Naive thymus-derived CD4-positive, alpha-beta T cell (primary cell): ENCODE measurements at regions of chr10 and their contacts with region 1.

Region 1: GRCh38 chr10:11120711-11121110 is 103.0 kb downstream of the CELF2 start:
- DNase-seq: peak in 1 of 9 donors; percentile 20
- ATAC-seq: no peak
- H3K4me3 ChIP-seq: no peak overlapping the region
- H3K4me3 Mint-ChIP-seq: peak overlapping the region in 9 of 10 donors; percentile 23 to 79 (median 64)
- H3K27ac ChIP-seq: peak overlapping the region; percentile 4
- H3K27ac Mint-ChIP-seq: peak overlapping the region in 8 of 9 donors; percentile 4 to 86 (median 76)
- H3K4me1 ChIP-seq: peaks cover 0 to 3% of the 10 kb centered on the region in 2 donors
- H3K4me1 Mint-ChIP-seq: peaks cover 3 to 66% (median 42%) of the 10 kb centered on the region in 7 donors
- H3K27me3 ChIP-seq: no peaks in the 10 kb centered on the region
- H3K27me3 Mint-ChIP-seq: peaks cover 0 to 2% (median 0%) of the 10 kb centered on the region in 5 donors

Region 2: GRCh38 chr10:10869592-10869991 is 251.1 kb before region 1 on chr10:
- CTCF ChIA-PET with region 1: no interaction called
- POLR2A ChIA-PET with region 1: no interaction called
- intact Hi-C with region 1: no loop called
- DNase-seq: no peak
- ATAC-seq: no peak
- H3K4me3 ChIP-seq: no peak overlapping the region
- H3K4me3 Mint-ChIP-seq: no peak overlapping the region
- H3K27ac ChIP-seq: no peak overlapping the region
- H3K27ac Mint-ChIP-seq: no peak overlapping the region
- H3K4me1 ChIP-seq: no peaks in the 10 kb centered on the region
- H3K4me1 Mint-ChIP-seq: no peaks in the 10 kb centered on the region
- H3K27me3 ChIP-seq: peaks cover 0 to 4% of the 10 kb centered on the region in 2 donors
- H3K27me3 Mint-ChIP-seq: peaks cover 18 to 39% (median 25%) of the 10 kb centered on the region in 5 donors

Region 3: DNA sequence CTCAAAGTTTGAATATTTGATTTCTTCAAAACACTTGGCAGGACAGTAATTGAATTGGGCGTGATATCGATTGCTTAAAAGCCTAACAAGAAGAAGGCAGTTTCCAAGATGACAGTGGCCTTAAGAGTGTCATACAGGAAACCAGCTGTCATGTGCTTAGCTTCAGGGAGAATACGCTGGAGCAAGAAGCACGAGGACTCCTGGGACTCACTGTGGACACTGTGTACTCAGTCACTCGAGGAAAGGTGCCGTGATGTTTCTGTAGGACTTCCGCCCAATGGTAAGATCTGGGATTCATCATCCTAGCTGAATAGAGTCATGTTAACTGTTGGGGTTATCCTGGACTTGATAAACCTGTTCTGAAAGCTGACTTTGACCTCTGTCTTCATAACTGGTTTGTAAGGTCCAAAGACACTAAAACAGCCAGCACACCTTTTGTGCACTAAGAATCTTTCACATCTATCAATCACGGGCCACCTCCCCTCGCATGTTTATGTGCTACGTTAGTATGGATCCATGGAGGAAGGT is 10.5 kb after region 1 on chr10:
- CTCF ChIA-PET with region 1: no interaction called
- POLR2A ChIA-PET with region 1: interaction called, 3 read pairs
- intact Hi-C with region 1: loop called in 1 of 2 experiments (anchors 2 kb)
- DNase-seq: no peak
- ATAC-seq: no peak
- H3K4me3 ChIP-seq: no peak overlapping the region
- H3K4me3 Mint-ChIP-seq: no peak overlapping the region
- H3K27ac ChIP-seq: no peak overlapping the region
- H3K27ac Mint-ChIP-seq: peak overlapping the region in 1 of 9 donors; percentile 45
- H3K4me1 ChIP-seq: no peaks in the 10 kb centered on the region
- H3K4me1 Mint-ChIP-seq: peaks cover 0 to 57% (median 36%) of the 10 kb centered on the region in 7 donors
- H3K27me3 ChIP-seq: no peaks in the 10 kb centered on the region
- H3K27me3 Mint-ChIP-seq: peaks cover 0 to 25% (median 0%) of the 10 kb centered on the region in 5 donors